Gastrocnemius medialis (tissue), 4 donors: ENCODE measurements at regions of chr13 and their contacts with region 1.

Region 1: DNA sequence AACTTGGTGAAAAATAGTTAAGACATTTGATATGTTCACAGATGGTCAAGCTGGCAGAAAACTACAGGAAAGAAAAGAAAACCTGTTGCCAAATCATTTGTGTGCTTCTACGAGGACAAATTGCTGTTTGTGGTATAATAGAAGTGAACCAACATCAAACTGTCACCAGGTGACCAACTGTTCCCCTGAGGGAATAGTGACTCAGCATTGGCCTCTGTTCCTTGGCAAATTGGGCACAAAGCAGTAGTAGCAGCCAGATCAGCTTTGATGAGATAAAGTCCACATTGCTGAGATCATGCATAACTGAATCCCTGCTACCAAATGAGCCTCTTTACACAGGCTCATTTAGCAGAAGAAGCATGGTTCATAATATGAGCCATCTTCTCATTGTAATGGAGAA is 103.5 kb downstream of the POSTN start:
- DNase-seq: no peak
- ATAC-seq: no peak
- H3K4me3 ChIP-seq: no peak overlapping the region
- H3K27ac ChIP-seq: no peak overlapping the region
- H3K4me1 ChIP-seq: no peaks in the 10 kb centered on the region
- H3K27me3 ChIP-seq: no peaks in the 10 kb centered on the region
- CTCF ChIP-seq: no peak
- POLR2A ChIP-seq: no peak

Region 2: GRCh38 chr13:37143911-37144310 is 351.1 kb before region 1 on chr13:
- in situ Hi-C with region 1: no loop called
- intact Hi-C with region 1: no loop called
- DNase-seq: no peak
- ATAC-seq: no peak
- H3K4me3 ChIP-seq: no peak overlapping the region
- H3K27ac ChIP-seq: no peak overlapping the region
- H3K4me1 ChIP-seq: no peaks in the 10 kb centered on the region
- H3K27me3 ChIP-seq: no peaks in the 10 kb centered on the region
- CTCF ChIP-seq: no peak
- POLR2A ChIP-seq: no peak

Region 3: DNA sequence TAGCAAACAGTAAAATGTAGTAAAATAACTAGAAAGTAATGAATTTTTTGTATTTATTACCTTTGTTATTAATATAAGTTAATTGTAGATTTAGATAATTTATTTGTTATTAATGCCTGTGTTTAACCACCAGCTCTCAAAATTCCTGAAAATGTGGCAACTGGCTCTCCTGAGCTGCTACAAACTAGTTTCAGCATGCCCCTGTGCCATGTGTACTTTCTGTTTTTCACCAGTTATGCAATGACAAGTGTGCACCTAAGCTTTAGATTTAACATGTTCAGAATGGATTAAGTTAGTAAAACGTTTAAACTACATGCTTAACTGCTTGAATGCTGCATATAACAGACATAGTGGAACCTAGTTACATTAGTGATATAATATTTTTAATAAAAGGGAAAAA is 15.4 kb after region 1 on chr13:
- in situ Hi-C with region 1: no loop called
- intact Hi-C with region 1: loop called (anchors 2 kb)
- DNase-seq: no peak
- ATAC-seq: no peak
- H3K4me3 ChIP-seq: no peak overlapping the region
- H3K27ac ChIP-seq: no peak overlapping the region
- H3K4me1 ChIP-seq: no peaks in the 10 kb centered on the region
- H3K27me3 ChIP-seq: no peaks in the 10 kb centered on the region
- CTCF ChIP-seq: no peak
- POLR2A ChIP-seq: no peak

Region 4: DNA sequence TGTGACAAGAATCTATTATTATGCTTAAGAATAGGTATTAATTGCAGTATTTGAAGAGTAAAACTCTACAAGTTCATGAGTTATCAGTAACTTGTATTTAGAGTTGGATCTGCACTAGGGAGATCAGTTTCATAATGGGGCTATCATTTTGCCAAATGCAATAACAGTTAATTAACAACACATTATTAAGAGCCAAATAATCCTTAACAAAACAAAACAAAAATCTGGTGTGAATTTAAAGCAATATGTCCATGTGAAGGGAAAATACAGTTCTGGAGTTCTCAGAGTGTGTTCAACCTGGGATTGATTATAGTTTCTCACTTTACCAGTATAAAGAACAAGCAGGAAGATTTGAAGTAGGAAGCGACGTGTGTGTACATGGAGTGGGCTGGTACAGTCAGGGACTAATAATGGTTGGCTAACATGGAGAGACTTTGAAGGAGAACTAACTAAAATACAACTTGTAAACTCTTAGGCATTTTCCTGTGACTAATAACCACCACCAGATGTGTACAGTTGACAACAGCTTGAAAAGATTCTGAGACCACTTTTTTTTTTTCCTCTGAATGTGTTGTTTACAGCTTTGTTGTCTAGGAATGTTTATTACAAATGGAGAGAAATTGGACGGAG is 45.0 kb after region 1 on chr13:
- in situ Hi-C with region 1: no loop called
- intact Hi-C with region 1: loop called (anchors 2 kb)
- DNase-seq: no peak
- ATAC-seq: no peak
- H3K4me3 ChIP-seq: no peak overlapping the region
- H3K27ac ChIP-seq: no peak overlapping the region
- H3K4me1 ChIP-seq: no peaks in the 10 kb centered on the region
- H3K27me3 ChIP-seq: no peaks in the 10 kb centered on the region
- CTCF ChIP-seq: no peak
- POLR2A ChIP-seq: no peak